HEK293 (cell line): ENCODE measurements at regions of chr20 and their contacts with region 1.

Region 1: DNA sequence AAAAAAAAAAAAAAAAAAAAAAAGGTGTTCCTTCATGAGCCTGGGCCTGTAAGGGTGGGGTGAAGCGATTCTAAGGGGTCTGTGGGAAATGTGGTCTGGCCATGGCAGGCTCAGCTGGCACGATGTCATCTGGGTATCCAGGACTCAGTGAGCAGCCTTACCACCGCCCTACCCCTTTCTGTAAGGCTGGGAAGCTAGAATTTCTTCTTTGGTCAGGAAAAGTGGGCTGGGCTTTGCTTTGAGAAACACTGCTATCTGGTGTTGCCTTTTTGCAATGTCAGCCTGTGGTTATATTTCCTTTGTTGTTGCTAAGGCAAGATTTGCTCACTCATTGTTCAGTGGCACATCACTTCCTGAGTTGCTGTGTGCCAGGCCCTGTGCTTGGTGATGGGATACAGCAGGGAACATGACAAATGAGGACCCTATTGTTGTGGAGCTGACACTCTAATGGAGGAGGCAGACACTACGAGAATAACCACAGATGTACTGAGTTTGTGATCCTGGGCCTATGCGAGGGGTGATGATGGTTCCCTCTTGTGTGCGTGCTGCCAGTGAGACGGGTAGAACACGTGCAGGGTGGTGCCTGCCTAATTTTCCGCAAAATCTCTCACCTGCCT is 45.9 kb upstream of the ZNFX1 start:
- H3K4me3 ChIP-seq: no peak overlapping the region
- H3K27ac ChIP-seq: no peak overlapping the region
- H3K4me1 ChIP-seq: no peaks in the 10 kb centered on the region
- CTCF ChIP-seq: peak; percentile 30; the same call in 1 of the 2 replicates

Region 2: DNA sequence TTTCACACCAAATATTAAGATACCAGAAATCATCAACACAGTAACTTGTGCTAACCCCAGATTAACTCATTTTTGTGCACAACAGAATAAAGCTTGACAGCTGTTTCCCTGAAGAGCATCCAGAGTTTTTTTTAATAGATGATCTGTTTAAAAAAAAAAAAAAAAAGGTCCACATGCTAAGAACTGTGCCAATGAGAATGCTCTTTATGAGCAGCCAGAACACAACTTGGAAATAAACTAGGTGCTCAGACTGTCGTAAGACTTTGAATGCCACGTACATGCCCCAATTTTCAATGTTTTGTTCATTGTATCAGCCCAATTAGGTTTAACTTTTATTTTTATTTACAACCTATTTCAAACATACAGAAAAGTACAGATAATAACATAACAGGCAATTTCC is 182.9 kb before region 1 on chr20:
- CTCF ChIA-PET with region 1: no interaction called
- POLR2A ChIA-PET with region 1: no interaction called
- H3K4me3 ChIP-seq: no peak overlapping the region
- H3K27ac ChIP-seq: no peak overlapping the region
- H3K4me1 ChIP-seq: no peaks in the 10 kb centered on the region
- CTCF ChIP-seq: no peak

Region 3: GRCh38 chr20:49278036-49278817 is 45.5 kb before region 1 on chr20 and contains the start of gene ZNFX1:
- CTCF ChIA-PET with region 1: interaction called, 4 read pairs
- POLR2A ChIA-PET with region 1: interaction called, 10 read pairs
- H3K4me3 ChIP-seq: peak within 1 kb of the TSS; percentile 77
- H3K27ac ChIP-seq: peak within 1 kb of the TSS; percentile 92
- H3K4me1 ChIP-seq: no peaks in the 10 kb centered on the region
- CTCF ChIP-seq: no peak

Region 4: DNA sequence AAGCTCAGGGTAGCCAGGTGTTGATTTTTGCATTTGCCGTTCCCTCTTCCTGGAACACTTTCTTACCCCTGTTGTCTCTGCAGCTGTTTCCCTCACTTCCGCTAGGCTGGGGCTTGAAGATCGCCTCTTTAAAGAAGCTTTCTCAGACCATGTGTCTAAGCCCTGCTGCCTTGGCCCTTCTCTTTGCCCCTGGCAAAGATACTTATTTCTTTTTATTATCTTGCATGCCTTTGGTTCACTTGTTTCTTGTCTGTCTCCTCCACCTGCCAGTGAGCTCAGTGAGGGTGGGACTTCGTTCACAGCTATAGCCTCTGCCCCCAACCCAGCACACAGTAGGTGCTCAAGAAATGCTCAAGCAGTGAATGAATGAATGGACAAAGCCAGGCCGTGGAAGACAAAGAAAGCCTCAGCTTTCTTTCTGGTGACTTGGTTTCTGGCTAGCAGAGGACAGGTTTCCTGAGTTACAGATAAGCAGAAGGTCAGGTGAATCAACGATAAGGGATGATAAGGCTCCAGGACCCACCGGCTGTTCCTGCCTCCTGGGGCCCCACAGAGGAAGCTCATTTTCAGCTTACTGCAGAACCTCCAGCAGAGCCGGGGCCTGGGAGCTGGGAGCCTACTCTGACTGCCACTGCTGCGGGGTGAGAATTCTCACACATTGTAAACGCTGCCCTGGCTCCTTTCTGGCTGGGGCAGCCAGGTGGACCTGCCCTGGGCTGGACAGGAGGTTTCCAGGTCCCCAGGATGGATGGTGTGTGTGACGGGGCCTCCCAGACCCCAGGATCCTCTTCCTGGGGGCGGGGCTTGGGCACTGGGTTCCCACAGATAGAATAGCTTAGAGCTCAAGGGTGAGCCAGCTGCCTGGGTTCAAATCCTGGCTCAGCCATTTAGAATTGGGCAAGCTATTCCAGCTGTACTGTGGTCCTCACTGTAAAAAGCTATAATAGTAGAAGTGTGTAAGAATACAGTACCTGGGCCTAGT is 688.8 kb after region 1 on chr20:
- CTCF ChIA-PET with region 1: no interaction called
- POLR2A ChIA-PET with region 1: no interaction called
- H3K4me3 ChIP-seq: no peak overlapping the region
- H3K27ac ChIP-seq: no peak overlapping the region
- H3K4me1 ChIP-seq: no peaks in the 10 kb centered on the region
- CTCF ChIP-seq: no peak